ENCODE measurements at regions of chr6 and their contacts with region 1.

Region 1: GRCh38 chr6:32933636-32934085 is 7.2 kb downstream of the HLA-DMB start:
- DNase-seq: peak in 1 of 2 donors; percentile 87
- H3K4me3 ChIP-seq: no peak overlapping the region
- H3K27ac ChIP-seq: no peak overlapping the region
- H3K4me1 ChIP-seq: no peaks in the 10 kb centered on the region
- H3K27me3 ChIP-seq: no peaks in the 10 kb centered on the region
- CTCF ChIP-seq: peak; percentile 67 to 81 (median 68)

Region 2: DNA sequence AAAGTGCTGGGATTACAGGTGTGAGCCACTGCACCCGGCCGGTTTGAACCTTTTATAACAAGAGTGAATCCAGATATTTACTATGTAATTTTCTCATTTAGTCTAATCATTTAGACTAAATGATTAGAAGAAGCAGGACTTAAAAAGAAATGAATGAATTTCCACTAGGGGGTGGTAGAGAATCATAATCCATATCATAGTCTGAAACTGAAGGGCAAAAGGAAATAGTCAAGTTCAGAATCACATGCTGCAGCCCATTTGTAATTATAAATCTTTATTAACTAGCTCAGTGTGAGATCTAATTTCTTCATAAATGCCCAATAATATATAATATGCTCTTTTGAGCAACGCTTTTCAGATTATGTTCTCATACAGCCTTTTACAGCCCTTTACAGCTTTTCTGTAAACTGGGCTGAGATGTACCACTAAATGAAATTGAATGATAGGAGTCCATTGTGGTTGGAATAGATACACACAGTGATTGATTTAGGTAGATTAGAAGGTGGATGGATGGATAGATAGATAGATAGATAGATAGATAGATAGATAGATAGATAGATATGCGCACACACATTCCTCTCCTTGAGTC is 47.9 kb before region 1 on chr6:
- intact Hi-C with region 1: loop called (anchors 2 kb)
- DNase-seq: no peak
- H3K4me3 ChIP-seq: no peak overlapping the region
- H3K27ac ChIP-seq: no peak overlapping the region
- H3K4me1 ChIP-seq: peaks cover 0 to 2% of the 10 kb centered on the region in 2 donors
- H3K27me3 ChIP-seq: no peaks in the 10 kb centered on the region
- CTCF ChIP-seq: peak; percentile 56 to 64 (median 63)

Region 3: DNA sequence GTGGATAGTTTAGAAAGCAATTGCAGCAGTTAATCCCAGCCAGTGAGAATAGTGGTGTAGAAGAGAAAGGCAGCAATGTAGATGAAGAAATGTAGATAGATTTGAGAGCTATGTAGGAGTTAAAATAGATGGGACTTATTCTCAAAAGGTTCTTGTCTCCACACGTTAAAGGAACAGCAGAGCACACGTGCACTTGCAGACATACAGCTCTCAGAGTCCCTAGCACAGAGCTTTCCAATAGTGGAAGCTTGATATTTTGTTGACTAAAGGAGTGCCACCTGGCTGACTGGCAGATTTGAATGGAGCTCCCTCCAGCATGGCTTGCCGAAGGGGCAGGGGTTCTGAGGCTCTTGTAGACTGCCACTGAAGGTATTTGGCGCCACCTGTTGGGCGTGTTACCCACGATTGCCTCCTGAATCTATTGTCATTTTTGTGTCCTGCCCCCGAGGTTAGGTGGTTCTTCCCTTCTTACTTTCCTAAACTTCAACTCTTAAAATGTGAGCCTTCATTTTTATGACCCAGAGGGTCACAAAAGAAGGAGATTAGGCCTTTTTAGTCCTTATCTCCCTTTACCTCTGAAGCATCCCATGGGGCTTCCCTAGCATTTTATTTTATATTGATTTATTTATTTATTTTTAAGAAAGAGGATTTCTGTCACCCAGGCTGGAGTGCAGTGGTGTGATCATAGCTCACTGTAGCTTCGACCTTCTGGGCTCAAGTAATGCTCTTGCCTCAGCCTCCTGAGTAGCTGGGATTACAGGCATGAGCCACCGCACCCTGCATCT is 51.1 kb after region 1 on chr6:
- intact Hi-C with region 1: loop called (anchors 1 kb)
- DNase-seq: peak; percentile 71 to 95
- H3K4me3 ChIP-seq: no peak overlapping the region
- H3K27ac ChIP-seq: peak overlapping the region in 1 of 2 donors; percentile 18
- H3K4me1 ChIP-seq: peaks cover 0 to 3% of the 10 kb centered on the region in 2 donors
- H3K27me3 ChIP-seq: no peaks in the 10 kb centered on the region
- CTCF ChIP-seq: peak; percentile 78 to 95 (median 89)

Measured in ascending aorta (tissue), 2 donors.